Naive thymus-derived CD4-positive, alpha-beta T cell (primary cell): ENCODE measurements at regions of chr20 and their contacts with region 1.

Region 1: GRCh38 chr20:4108495-4109306 is 93.3 kb upstream of the RNF24 start:
- DNase-seq: peak; percentile 26 to 66 (median 53)
- ATAC-seq: peak; percentile 91
- H3K4me3 ChIP-seq: no peak overlapping the region
- H3K4me3 Mint-ChIP-seq: peak overlapping the region in 1 of 10 donors; percentile 30
- H3K27ac ChIP-seq: no peak overlapping the region
- H3K27ac Mint-ChIP-seq: peak overlapping the region in 1 of 9 donors; percentile 55
- H3K4me1 ChIP-seq: no peaks in the 10 kb centered on the region
- H3K4me1 Mint-ChIP-seq: peaks cover 0 to 37% (median 5%) of the 10 kb centered on the region in 7 donors
- H3K27me3 ChIP-seq: no peaks in the 10 kb centered on the region
- H3K27me3 Mint-ChIP-seq: peaks cover 0 to 12% (median 0%) of the 10 kb centered on the region in 5 donors

Region 2: GRCh38 chr20:2845607-2846006 is 1263.1 kb before region 1 on chr20:
- CTCF ChIA-PET with region 1: no interaction called
- POLR2A ChIA-PET with region 1: no interaction called
- intact Hi-C with region 1: no loop called
- DNase-seq: peak in 1 of 9 donors; percentile 6
- ATAC-seq: no peak
- H3K4me3 ChIP-seq: no peak overlapping the region
- H3K4me3 Mint-ChIP-seq: no peak overlapping the region
- H3K27ac ChIP-seq: no peak overlapping the region
- H3K27ac Mint-ChIP-seq: peak overlapping the region in 2 of 9 donors; percentile 14 to 19
- H3K4me1 ChIP-seq: peaks cover 6 to 9% of the 10 kb centered on the region in 2 donors
- H3K4me1 Mint-ChIP-seq: peaks cover 18 to 39% (median 30%) of the 10 kb centered on the region in 7 donors
- H3K27me3 ChIP-seq: no peaks in the 10 kb centered on the region
- H3K27me3 Mint-ChIP-seq: no peaks in the 10 kb centered on the region

Region 3: GRCh38 chr20:3970016-3970415 is 138.7 kb before region 1 on chr20:
- CTCF ChIA-PET with region 1: no interaction called
- POLR2A ChIA-PET with region 1: no interaction called
- intact Hi-C with region 1: no loop called
- DNase-seq: no peak
- ATAC-seq: no peak
- H3K4me3 ChIP-seq: no peak overlapping the region
- H3K4me3 Mint-ChIP-seq: no peak overlapping the region
- H3K27ac ChIP-seq: no peak overlapping the region
- H3K27ac Mint-ChIP-seq: no peak overlapping the region
- H3K4me1 ChIP-seq: no peaks in the 10 kb centered on the region
- H3K4me1 Mint-ChIP-seq: peaks cover 8 to 31% (median 18%) of the 10 kb centered on the region in 7 donors
- H3K27me3 ChIP-seq: no peaks in the 10 kb centered on the region
- H3K27me3 Mint-ChIP-seq: no peaks in the 10 kb centered on the region

Region 4: GRCh38 chr20:4130404-4131189 is 21.9 kb after region 1 on chr20:
- CTCF ChIA-PET with region 1: no interaction called
- POLR2A ChIA-PET with region 1: no interaction called
- intact Hi-C with region 1: loop called in 1 of 2 experiments (anchors 2 kb)
- DNase-seq: peak in 1 of 9 donors; percentile 71
- ATAC-seq: peak; percentile 48
- H3K4me3 ChIP-seq: no peak overlapping the region
- H3K4me3 Mint-ChIP-seq: peak overlapping the region in 1 of 10 donors; percentile 79
- H3K27ac ChIP-seq: no peak overlapping the region
- H3K27ac Mint-ChIP-seq: peak overlapping the region in 2 of 9 donors; percentile 1 to 88
- H3K4me1 ChIP-seq: peaks cover 0 to 4% of the 10 kb centered on the region in 2 donors
- H3K4me1 Mint-ChIP-seq: peaks cover 0 to 42% (median 10%) of the 10 kb centered on the region in 7 donors
- H3K27me3 ChIP-seq: no peaks in the 10 kb centered on the region
- H3K27me3 Mint-ChIP-seq: peaks cover 12 to 25% (median 23%) of the 10 kb centered on the region in 5 donors

Region 5: GRCh38 chr20:4592316-4593148 is 483.8 kb after region 1 on chr20:
- CTCF ChIA-PET with region 1: interaction called, 6 read pairs
- POLR2A ChIA-PET with region 1: no interaction called
- intact Hi-C with region 1: loop called in 1 of 2 experiments (anchors 1 kb)
- DNase-seq: peak; percentile 8 to 77 (median 51)
- ATAC-seq: peak; percentile 84
- H3K4me3 ChIP-seq: peak overlapping the region; percentile 56
- H3K4me3 Mint-ChIP-seq: peak overlapping the region; percentile 59 to 83 (median 76)
- H3K27ac ChIP-seq: no peak overlapping the region
- H3K27ac Mint-ChIP-seq: peak overlapping the region in 1 of 9 donors; percentile 7
- H3K4me1 ChIP-seq: peaks cover 7 to 8% of the 10 kb centered on the region in 2 donors
- H3K4me1 Mint-ChIP-seq: peaks cover 6 to 17% (median 8%) of the 10 kb centered on the region in 7 donors
- H3K27me3 ChIP-seq: no peaks in the 10 kb centered on the region
- H3K27me3 Mint-ChIP-seq: peaks cover 10 to 33% (median 16%) of the 10 kb centered on the region in 5 donors